Kidney (tissue), 22 donors: ENCODE measurements at regions of chr2 and their contacts with region 1.

Region 1: GRCh38 chr2:64661741-64662169 is 8.0 kb upstream of the SERTAD2 start:
- DNase-seq: no peak
- H3K4me3 ChIP-seq: no peak overlapping the region
- H3K27ac ChIP-seq: no peak overlapping the region
- H3K4me1 ChIP-seq: no peaks in the 10 kb centered on the region
- H3K27me3 ChIP-seq: no peaks in the 10 kb centered on the region
- CTCF ChIP-seq: no peak

Region 2: GRCh38 chr2:64453770-64454385 is 207.9 kb before region 1 on chr2 and contains the start of gene LGALSL:
- intact Hi-C with region 1: no loop called
- DNase-seq: peak; percentile 87 to 93 (median 90)
- H3K4me3 ChIP-seq: peak within 1 kb of the TSS; percentile 70 to 72 (median 70)
- H3K27ac ChIP-seq: peak within 1 kb of the TSS; percentile 95 to 97
- H3K4me1 ChIP-seq: peaks cover 3 to 21% (median 9%) of the 10 kb centered on the region in 3 donors
- H3K27me3 ChIP-seq: no peaks in the 10 kb centered on the region
- CTCF ChIP-seq: no peak
- total RNA-seq, gene LGALSL: 17.3 TPM

Region 3: GRCh38 chr2:64737547-64737946 is 75.8 kb after region 1 on chr2:
- intact Hi-C with region 1: loop called (anchors 5 kb)
- DNase-seq: no peak
- H3K4me3 ChIP-seq: no peak overlapping the region
- H3K27ac ChIP-seq: no peak overlapping the region
- H3K4me1 ChIP-seq: no peaks in the 10 kb centered on the region
- H3K27me3 ChIP-seq: no peaks in the 10 kb centered on the region
- CTCF ChIP-seq: no peak

Region 4: GRCh38 chr2:64779117-64779690 is 117.4 kb after region 1 on chr2:
- intact Hi-C with region 1: no loop called
- DNase-seq: peak in 2 of 5 donors; percentile 12 to 40
- H3K4me3 ChIP-seq: no peak overlapping the region
- H3K27ac ChIP-seq: no peak overlapping the region
- H3K4me1 ChIP-seq: peaks cover 0 to 2% (median 0%) of the 10 kb centered on the region in 3 donors
- H3K27me3 ChIP-seq: no peaks in the 10 kb centered on the region
- CTCF ChIP-seq: no peak

Region 5: DNA sequence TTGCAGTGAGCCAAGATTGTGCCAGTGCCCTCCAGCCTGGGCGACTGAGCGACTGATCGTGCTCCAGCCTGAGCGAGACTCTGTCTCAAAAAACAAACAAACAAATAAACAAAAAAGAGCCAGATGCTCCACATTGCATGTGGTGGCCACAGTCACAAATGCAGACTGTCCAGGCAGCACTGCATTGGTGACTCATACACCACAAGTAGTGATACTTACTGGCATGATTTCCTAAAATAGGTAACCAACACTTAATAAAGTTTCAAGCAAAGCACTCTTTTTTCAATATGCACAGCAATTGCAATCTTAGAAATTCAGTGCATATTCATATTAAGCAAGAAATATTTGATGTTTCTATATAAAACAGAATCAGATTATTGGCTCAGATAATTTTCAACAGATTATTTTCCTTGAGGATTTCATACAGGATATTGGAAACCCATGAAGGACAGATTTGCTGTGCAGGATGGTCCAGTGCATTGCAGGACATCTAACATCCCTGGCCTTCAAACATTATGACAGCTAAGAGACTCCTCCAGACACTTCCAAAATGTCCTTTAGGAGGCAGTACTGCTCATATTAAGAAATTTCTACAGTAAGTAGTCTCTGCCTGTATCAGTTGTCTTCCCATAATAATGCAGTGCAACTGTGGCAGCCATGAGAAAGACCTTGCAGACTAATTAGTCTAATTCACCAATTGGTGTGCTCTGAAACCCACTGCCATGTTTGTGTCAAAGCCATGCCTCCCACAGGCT is 316.9 kb after region 1 on chr2:
- intact Hi-C with region 1: no loop called
- DNase-seq: no peak
- H3K4me3 ChIP-seq: no peak overlapping the region
- H3K27ac ChIP-seq: no peak overlapping the region
- H3K4me1 ChIP-seq: peaks cover 0 to 4% (median 0%) of the 10 kb centered on the region in 3 donors
- H3K27me3 ChIP-seq: no peaks in the 10 kb centered on the region
- CTCF ChIP-seq: no peak